Dorsolateral prefrontal cortex (tissue), 120 donors: ENCODE measurements at regions of chr15 and their contacts with region 1.

Region 1: DNA sequence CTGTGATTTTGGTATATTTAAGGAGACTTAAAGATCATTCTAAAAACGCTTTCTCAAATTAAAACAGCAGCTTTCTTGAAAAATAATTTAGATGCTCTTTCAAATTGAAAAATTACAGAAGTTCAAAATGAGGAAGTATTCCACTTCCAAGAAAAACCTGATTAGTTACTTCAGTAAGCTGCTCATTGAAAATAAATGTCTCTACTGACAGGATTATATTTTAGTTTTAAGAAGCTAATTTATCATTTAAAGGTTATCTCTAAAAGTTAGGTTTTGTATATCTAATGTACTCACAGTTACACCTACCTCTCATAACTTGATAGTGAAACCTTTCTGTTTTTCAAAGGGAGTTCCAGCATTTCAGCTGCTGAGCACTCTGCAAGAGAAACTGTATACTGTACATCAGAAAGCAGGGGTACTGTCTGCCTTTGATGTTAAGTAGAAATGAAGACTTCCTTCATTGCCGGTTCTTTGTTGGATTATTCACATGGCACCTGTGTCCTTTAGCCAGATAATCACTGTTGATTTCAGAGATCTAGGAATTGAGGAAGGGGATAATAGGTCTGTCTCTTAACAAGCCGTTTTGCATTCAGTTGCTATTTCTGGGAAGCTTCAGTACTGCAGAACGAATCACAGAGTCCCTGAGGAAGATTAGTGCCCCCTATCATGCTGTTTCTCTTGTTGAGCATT is 161.6 kb downstream of the TCF12 start:
- DNase-seq: no peak
- H3K4me3 ChIP-seq: peak overlapping the region in 36 of 59 donors; percentile 0 to 47 (median 22)
- H3K27ac ChIP-seq: peak overlapping the region in 58 of 59 donors; percentile 1 to 86 (median 76)
- H3K27me3 ChIP-seq: no peaks in the 10 kb centered on the region
- CTCF ChIP-seq: peak in 34 of 56 donors; percentile 11 to 55 (median 30)

Region 2: DNA sequence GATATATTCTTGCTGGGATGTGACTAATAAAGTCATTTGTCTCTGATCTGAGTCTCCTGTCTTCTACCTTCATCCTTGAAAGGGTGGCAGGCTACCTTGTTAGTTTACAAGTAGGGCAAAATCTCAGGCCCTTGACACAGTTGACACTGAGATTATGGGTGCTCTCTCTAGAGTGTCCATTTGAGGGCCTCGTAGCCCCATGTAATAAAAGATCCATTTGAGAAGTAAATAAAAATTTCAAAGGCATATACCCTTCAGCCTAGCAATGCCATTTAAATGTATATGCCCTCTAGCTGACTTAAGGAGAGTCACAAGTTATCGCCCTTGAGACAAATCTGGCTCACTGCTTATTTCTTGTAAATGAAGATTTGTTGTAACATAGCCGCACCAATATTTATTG is 63.1 kb before region 1 on chr15:
- intact Hi-C with region 1: loop called in 1 of 2 experiments (anchors 5 kb)
- DNase-seq: no peak
- H3K4me3 ChIP-seq: no peak overlapping the region
- H3K27ac ChIP-seq: peak overlapping the region in 49 of 59 donors; percentile 4 to 83 (median 56)
- H3K27me3 ChIP-seq: no peaks in the 10 kb centered on the region
- CTCF ChIP-seq: peak in 47 of 56 donors; percentile 10 to 72 (median 45)

Region 3: DNA sequence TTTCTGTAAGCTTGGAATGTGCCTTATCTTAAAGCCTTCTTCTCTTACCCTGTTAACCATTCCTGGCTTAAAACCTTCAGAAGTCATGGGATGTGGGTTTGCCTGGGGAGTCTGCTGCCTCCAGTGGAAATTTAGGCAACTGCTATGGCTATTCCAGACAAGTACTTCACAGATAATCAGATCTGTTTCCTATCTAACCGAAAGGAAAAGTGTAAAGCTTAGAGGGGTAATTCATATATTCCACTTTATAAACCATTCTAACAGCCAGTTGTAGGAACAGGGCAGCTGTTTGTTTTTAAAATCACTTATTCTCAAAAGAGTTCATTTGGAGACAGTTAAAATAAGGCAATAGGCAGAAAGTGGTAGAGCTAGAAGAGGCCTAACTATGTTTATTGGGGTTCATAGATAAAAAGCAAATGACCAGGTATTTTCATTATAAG is 58.3 kb after region 1 on chr15:
- intact Hi-C with region 1: loop called in 1 of 2 experiments (anchors 5 kb)
- DNase-seq: peak in 1 of 10 donors; percentile 44
- H3K4me3 ChIP-seq: no peak overlapping the region
- H3K27ac ChIP-seq: peak overlapping the region in 33 of 59 donors; percentile 1 to 63 (median 34)
- H3K27me3 ChIP-seq: no peaks in the 10 kb centered on the region
- CTCF ChIP-seq: peak; percentile 49 to 89 (median 74)